ENCODE measurements at regions of chr11 and their contacts with region 1.

Region 1: GRCh38 chr11:35305670-35306382 is 113.5 kb downstream of the SLC1A2 start:
- DNase-seq: no peak
- H3K4me3 Mint-ChIP-seq: no peak overlapping the region
- H3K27ac Mint-ChIP-seq: no peak overlapping the region
- H3K4me1 Mint-ChIP-seq: peaks cover 28% of the 10 kb centered on the region
- H3K27me3 Mint-ChIP-seq: peaks cover 4% of the 10 kb centered on the region

Region 2: DNA sequence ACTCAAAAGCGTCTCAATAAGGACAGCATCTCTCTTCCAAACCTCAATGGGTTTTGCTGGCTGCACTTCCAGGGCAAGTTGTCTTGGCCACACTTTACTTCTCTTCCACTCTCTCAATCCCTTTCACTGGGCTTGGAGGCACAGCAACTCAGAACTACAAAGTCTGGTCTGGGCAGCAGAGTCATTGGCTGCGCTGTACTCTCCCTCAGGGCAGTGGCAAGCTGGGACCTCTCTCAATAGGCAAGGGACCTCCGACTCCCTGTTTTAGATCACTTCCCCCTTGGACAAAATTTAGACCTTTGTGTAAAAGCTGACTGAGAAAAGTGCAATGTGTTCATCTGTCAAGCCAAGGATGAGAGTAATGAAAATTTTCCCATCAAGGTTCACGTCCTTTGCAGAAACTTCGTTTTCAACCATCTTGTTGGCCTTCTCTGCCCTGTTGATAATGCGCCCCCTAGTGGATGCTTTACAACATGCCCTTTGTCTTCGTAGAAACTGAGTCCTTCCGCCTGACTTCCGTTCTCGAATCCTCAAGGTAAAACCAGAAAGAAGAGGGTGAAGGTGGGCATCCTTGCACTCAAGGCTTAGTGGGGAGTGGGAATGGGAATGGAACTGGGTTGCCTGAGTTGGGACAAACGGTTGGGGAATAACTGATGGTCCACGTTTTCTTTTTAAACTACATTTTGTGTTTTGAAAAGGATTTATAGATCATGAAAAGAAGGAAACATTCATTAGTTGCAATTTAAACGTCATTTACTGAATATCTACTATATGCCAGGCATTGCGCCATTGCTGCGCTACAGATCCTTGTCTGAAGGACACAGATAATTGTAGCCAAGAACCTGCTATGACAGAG is 67.7 kb before region 1 on chr11:
- intact Hi-C with region 1: loop called (anchors 5 kb)
- DNase-seq: peak; percentile 48
- H3K4me3 Mint-ChIP-seq: peak overlapping the region; percentile 42
- H3K27ac Mint-ChIP-seq: peak overlapping the region; percentile 36
- H3K4me1 Mint-ChIP-seq: peaks cover 67% of the 10 kb centered on the region
- H3K27me3 Mint-ChIP-seq: no peaks in the 10 kb centered on the region

Region 3: GRCh38 chr11:35337136-35337918 is 31.5 kb after region 1 on chr11:
- intact Hi-C with region 1: loop called (anchors 1 kb)
- DNase-seq: no peak
- H3K4me3 Mint-ChIP-seq: no peak overlapping the region
- H3K27ac Mint-ChIP-seq: peak overlapping the region; percentile 6
- H3K4me1 Mint-ChIP-seq: peaks cover 40% of the 10 kb centered on the region
- H3K27me3 Mint-ChIP-seq: peaks cover 3% of the 10 kb centered on the region

Region 4: GRCh38 chr11:35343033-35343598 is 37.3 kb after region 1 on chr11:
- intact Hi-C with region 1: loop called (anchors 2 kb)
- DNase-seq: peak; percentile 65
- H3K4me3 Mint-ChIP-seq: peak overlapping the region; percentile 27
- H3K27ac Mint-ChIP-seq: peak overlapping the region; percentile 79
- H3K4me1 Mint-ChIP-seq: peaks cover 46% of the 10 kb centered on the region
- H3K27me3 Mint-ChIP-seq: peaks cover 9% of the 10 kb centered on the region

Region 5: GRCh38 chr11:35485656-35486322 is 180.0 kb after region 1 on chr11:
- intact Hi-C with region 1: no loop called
- DNase-seq: peak; percentile 34
- H3K4me3 Mint-ChIP-seq: no peak overlapping the region
- H3K27ac Mint-ChIP-seq: no peak overlapping the region
- H3K4me1 Mint-ChIP-seq: no peaks in the 10 kb centered on the region
- H3K27me3 Mint-ChIP-seq: peaks cover 20% of the 10 kb centered on the region